Transverse colon (tissue), 4 donors: ENCODE measurements at regions of chr13 and their contacts with region 1.

Region 1: DNA sequence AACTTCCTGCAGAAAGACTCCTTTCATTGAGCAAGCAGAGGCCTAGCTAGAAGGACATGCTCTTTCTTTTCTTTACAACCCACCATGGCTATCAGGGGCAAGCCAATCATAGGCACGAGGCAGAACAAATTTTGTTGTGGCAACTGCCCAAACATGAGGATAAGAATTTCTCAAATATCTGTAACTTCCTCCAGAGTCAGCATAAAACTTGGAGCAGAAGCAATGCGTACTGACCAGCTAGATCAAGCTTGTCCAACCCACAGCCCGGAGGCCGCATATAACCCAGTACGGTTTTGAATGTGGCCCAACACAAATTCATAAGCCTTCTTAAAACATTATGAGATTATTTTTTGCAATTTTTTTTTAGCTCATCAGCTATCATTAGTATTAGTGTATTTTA is 87.0 kb upstream of the SOX21 start:
- DNase-seq: no peak
- H3K4me3 ChIP-seq: no peak overlapping the region
- H3K27ac ChIP-seq: no peak overlapping the region
- H3K4me1 ChIP-seq: no peaks in the 10 kb centered on the region
- H3K27me3 ChIP-seq: no peaks in the 10 kb centered on the region
- CTCF ChIP-seq: no peak
- EP300 ChIP-seq: no peak
- POLR2A ChIP-seq: no peak

Region 2: DNA sequence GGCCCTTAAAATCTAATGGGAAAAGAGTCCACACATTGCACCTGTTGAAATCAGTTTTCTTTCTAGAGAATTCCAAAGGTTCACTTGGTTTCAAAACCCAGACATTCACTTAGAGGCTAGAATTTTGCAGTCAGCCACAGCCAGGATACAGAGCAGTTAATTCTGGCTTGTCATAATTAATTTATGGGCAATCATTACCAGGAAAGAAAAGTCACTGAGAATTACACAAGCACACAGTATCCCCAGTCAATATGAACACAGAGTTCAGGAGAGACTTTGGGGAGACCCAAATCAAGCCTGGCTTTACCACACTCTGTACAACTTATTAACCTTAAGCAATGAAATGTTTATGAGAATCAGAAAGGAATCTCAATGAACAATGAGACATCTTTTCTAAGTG is 137.3 kb after region 1 on chr13:
- in situ Hi-C with region 1: no loop called
- intact Hi-C with region 1: no loop called
- DNase-seq: no peak
- H3K4me3 ChIP-seq: no peak overlapping the region
- H3K27ac ChIP-seq: no peak overlapping the region
- H3K4me1 ChIP-seq: no peaks in the 10 kb centered on the region
- H3K27me3 ChIP-seq: no peaks in the 10 kb centered on the region
- CTCF ChIP-seq: no peak
- EP300 ChIP-seq: no peak
- POLR2A ChIP-seq: no peak

Region 3: DNA sequence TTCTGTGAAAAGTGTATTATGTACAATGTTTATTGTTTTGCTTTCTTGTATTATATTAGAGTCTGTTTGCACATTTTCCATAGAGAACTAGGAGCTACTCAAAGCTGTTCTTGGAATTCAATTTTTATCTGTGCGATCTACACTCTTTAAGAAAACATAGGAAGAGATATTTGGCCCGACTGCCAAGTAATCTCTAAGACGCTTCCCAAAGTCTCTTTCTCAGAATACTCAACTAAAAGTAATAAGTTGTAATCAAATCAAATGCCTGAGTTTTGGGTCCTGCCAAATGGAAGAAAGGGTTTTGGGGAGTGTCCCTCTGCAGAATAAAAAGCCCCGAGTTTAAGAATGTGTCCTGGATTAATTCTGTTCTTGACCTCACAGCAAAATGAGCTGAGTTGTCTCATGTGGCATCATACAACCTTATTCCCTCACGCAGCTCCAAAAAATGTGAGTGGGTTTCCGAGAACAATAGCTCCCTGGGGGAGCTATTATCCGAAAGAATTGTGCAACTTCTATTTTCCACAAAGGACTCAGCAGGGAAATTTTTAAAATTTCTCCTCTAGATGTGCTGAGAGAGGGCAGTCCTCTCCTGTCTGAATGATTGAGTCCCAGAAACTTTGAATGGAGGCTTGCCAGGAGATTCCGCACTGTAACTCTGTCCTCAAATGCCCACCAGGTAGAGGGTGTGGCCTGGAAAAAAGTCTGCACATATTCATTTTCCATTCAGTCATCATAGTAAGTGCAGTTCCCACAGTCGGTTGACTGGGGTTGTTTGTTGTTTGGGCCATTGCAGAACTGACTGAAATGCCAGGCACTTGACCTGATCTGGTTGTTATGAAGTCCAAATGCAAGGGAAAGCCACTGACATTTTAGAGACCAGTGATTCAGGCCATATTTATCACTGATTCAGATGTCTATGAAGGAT is 193.0 kb after region 1 on chr13:
- in situ Hi-C with region 1: no loop called
- intact Hi-C with region 1: loop called (anchors 5 kb)
- DNase-seq: no peak
- H3K4me3 ChIP-seq: no peak overlapping the region
- H3K27ac ChIP-seq: no peak overlapping the region
- H3K4me1 ChIP-seq: no peaks in the 10 kb centered on the region
- H3K27me3 ChIP-seq: peaks cover 18% of the 10 kb centered on the region
- CTCF ChIP-seq: no peak
- EP300 ChIP-seq: no peak
- POLR2A ChIP-seq: no peak